CD4-positive, alpha-beta T cell (primary cell): ENCODE measurements at regions of chr17 and their contacts with region 1.

Region 1: DNA sequence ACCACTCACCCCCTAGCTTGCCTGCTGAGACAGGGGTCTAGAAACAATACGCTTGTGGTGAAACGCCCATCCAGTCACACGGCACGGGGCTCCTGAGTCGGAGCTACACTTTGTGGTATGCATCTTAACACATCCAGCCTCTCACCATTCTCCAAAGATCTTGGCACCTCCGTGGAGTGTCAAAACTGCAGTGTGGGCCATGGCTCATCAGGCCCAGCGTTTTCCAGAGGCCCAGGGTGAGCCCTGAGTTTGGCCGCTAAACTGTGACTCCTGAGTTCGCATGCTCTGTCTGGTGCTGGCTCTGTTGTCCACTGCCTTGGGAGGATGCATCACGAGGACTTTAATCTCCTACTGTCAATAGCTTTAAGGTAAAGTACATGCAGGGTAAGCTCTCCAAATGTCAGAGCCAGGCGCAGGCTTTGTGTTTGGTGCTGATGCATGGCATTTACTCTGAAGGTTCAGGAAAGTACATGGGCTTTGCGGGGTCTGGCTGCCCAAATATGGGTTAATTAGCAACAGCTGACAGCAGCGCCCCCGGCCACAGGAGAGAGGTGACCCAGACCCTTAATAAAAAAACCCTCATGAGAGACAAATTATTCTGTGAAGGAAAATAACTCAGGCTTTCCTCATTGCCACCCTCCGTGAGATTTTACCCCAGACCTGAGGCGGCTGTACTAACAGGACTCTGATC is 118.4 kb downstream of the CCDC182 start:
- DNase-seq: no peak
- ATAC-seq: no peak
- H3K4me3 ChIP-seq: no peak overlapping the region
- H3K4me3 Mint-ChIP-seq: no peak overlapping the region
- H3K27ac ChIP-seq: no peak overlapping the region
- H3K27ac Mint-ChIP-seq: no peak overlapping the region
- H3K4me1 ChIP-seq: no peaks in the 10 kb centered on the region
- H3K4me1 Mint-ChIP-seq: no peaks in the 10 kb centered on the region
- H3K27me3 ChIP-seq: no peaks in the 10 kb centered on the region
- H3K27me3 Mint-ChIP-seq: no peaks in the 10 kb centered on the region
- CTCF ChIP-seq: no peak

Region 2: DNA sequence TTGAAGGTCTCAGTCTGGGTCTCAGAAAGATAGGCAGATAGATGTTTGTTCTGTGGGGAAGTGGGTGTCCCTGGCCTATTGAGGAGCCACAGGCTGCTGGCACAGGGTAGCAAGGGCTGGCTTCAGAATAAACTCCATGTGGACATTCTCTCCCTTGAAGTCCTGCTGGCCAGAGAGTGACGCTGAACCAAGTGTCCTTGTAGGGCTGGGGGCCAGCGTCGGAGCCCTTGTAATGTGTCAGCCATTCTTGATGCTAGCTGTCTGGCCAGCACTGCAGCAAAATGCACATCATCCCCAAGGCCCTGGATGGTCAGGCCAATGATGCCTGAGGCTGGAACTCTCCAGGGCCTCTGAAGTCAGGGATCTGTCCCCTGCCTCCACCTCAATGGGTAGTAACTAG is 15.1 kb after region 1 on chr17:
- CTCF ChIA-PET with region 1: no interaction called
- POLR2A ChIA-PET with region 1: no interaction called
- intact Hi-C with region 1: loop called in 1 of 2 experiments (anchors 2 kb)
- DNase-seq: no peak
- ATAC-seq: no peak
- H3K4me3 ChIP-seq: no peak overlapping the region
- H3K4me3 Mint-ChIP-seq: no peak overlapping the region
- H3K27ac ChIP-seq: no peak overlapping the region
- H3K27ac Mint-ChIP-seq: no peak overlapping the region
- H3K4me1 ChIP-seq: no peaks in the 10 kb centered on the region
- H3K4me1 Mint-ChIP-seq: no peaks in the 10 kb centered on the region
- H3K27me3 ChIP-seq: no peaks in the 10 kb centered on the region
- H3K27me3 Mint-ChIP-seq: no peaks in the 10 kb centered on the region
- CTCF ChIP-seq: no peak